ENCODE measurements at regions of chr22 and their contacts with region 1.

Region 1: DNA sequence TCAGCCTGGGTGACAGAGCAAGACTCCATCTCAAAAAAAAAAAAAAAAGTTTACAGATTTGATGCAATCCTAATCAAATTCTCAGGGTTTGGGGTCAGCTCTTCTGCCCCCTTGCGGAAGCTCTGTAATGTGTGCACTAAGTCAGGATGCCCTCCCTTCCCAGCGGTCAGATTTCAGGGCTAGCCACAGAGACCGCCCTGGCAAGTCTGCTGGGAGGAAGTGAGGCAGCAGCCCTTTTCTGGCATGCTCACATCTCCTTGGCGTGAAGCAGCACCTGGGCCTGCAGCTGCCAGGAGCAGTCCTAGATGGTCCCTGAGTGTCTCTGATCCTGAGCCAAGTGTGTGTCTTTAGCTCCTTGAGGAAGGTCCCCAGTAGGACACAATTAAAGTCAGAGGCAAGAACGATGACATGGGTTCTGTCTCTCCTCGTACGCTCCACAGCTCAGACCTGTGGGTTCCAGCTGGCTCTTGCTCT is 10.9 kb upstream of the APOBEC3C start:
- DNase-seq: peak; percentile 55
- H3K4me3 ChIP-seq: no peak overlapping the region
- H3K27me3 ChIP-seq: peaks cover 5% of the 10 kb centered on the region
- CTCF ChIP-seq: peak; percentile 76

Region 2: DNA sequence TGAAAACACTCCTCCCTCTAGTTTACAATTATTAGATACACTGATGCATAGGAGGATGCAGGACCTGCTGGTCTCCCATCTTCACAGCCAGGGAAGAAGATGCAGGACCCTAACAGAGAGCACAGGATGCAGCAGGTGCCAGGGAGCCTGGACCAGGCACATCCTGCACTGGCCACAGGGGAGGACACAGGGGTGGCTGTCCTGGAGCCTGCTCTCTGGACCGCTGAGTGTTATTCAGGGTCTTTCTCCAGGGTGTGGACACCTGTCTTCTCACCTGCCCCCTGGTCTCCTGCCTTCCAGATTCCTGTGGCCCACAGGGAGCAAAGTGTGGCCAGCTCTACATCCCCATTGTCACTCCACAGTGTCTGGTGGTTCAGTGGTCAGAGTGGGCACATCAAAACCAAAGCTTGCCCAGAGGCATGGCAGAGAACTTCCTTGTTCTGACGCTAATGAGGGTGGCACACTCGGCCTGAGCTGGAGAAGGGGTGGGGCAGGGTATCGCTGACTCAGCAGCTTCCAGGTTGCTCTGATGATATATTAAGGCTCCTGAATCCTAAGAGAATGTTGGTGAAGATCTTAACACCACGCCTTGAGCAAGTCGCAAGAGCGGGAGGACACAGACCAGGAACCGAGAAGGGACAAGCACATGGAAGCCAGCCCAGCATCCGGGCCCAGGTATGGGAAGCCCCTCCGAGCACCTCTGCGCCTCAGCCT is 46.0 kb before region 1 on chr22 and contains the start of gene APOBEC3A:
- CTCF ChIA-PET with region 1: no interaction called
- POLR2A ChIA-PET with region 1: no interaction called
- DNase-seq: no peak
- H3K4me3 ChIP-seq: no peak within 1 kb of the TSS
- H3K27me3 ChIP-seq: peaks cover 13% of the 10 kb centered on the region
- CTCF ChIP-seq: no peak
- polyA plus RNA-seq, gene APOBEC3A: not detected in 2 replicates

Region 3: GRCh38 chr22:39123751-39124601 is 120.8 kb after region 1 on chr22:
- CTCF ChIA-PET with region 1: interaction called, 13 read pairs
- POLR2A ChIA-PET with region 1: no interaction called
- DNase-seq: no peak
- H3K4me3 ChIP-seq: no peak overlapping the region
- H3K27me3 ChIP-seq: 0 out of 2 replicates have a peak, but pooled peaks cover 2% of the 10 kb centered on the region
- CTCF ChIP-seq: no peak